Activated naive CD4-positive, alpha-beta T cell treated with anti-CD3 and anti-CD28 coated beads for 36 hours (primary cell): ENCODE measurements at regions of chr18 and their contacts with region 1.

Region 1: GRCh38 chr18:5021558-5021957 is 175.5 kb downstream of the AKAIN1 start:
- DNase-seq: no peak
- H3K4me3 Mint-ChIP-seq: no peak overlapping the region
- H3K27ac Mint-ChIP-seq: no peak overlapping the region
- H3K4me1 Mint-ChIP-seq: no peaks in the 10 kb centered on the region
- H3K27me3 Mint-ChIP-seq: peaks cover 17% of the 10 kb centered on the region

Region 2: GRCh38 chr18:3794537-3795348 is 1226.8 kb before region 1 on chr18:
- CTCF ChIA-PET with region 1: no interaction called
- intact Hi-C with region 1: no loop called
- DNase-seq: no peak
- H3K4me3 Mint-ChIP-seq: no peak overlapping the region
- H3K27ac Mint-ChIP-seq: no peak overlapping the region
- H3K4me1 Mint-ChIP-seq: no peaks in the 10 kb centered on the region
- H3K27me3 Mint-ChIP-seq: no peaks in the 10 kb centered on the region

Region 3: DNA sequence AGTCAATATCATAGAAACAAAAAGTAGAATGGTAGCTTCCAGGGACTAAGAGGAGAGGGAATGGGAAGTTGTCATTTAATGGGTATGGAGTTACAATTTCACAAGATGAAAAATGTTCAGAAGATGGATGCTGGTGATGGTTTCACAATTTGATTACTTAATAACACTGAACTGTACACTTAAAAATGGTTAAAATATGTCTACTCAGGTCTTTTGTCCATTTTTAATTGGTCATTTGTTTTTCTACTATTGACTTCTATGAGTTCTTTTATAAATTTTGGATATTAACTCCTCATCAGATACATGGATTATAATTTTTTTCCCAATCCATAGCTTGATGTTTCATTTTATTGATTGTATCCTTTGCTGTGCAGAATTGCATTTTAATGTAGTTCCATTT is 100.0 kb before region 1 on chr18:
- CTCF ChIA-PET with region 1: no interaction called
- intact Hi-C with region 1: no loop called
- DNase-seq: no peak
- H3K4me3 Mint-ChIP-seq: no peak overlapping the region
- H3K27ac Mint-ChIP-seq: no peak overlapping the region
- H3K4me1 Mint-ChIP-seq: no peaks in the 10 kb centered on the region
- H3K27me3 Mint-ChIP-seq: peaks cover 2% of the 10 kb centered on the region

Region 4: GRCh38 chr18:5036523-5036922 is 15.0 kb after region 1 on chr18:
- CTCF ChIA-PET with region 1: interaction called, 14 read pairs
- intact Hi-C with region 1: no loop called
- DNase-seq: no peak
- H3K4me3 Mint-ChIP-seq: no peak overlapping the region
- H3K27ac Mint-ChIP-seq: no peak overlapping the region
- H3K4me1 Mint-ChIP-seq: no peaks in the 10 kb centered on the region
- H3K27me3 Mint-ChIP-seq: peaks cover 12% of the 10 kb centered on the region